ENCODE measurements at regions of chr1 and their contacts with region 1.

Region 1: GRCh38 chr1:232630047-232630893 is at the start of gene SIPA1L2:
- DNase-seq: peak; percentile 97
- H3K4me3 ChIP-seq: peak within 1 kb of the TSS; percentile 65 to 90 (median 79)
- H3K27ac ChIP-seq: peak within 1 kb of the TSS; percentile 32 to 87 (median 84)
- H3K4me1 ChIP-seq: peaks cover 5 to 73% (median 34%) of the 10 kb centered on the region in 6 donors
- H3K27me3 ChIP-seq: peaks cover 0 to 54% (median 10%) of the 10 kb centered on the region in 7 donors
- CTCF ChIP-seq: peak in 7 of 11 experiments; percentile 37 to 56 (median 41)
- POLR2A ChIP-seq: no peak
- total RNA-seq, gene SIPA1L2: 18.4 to 67.7 (median 34.6) TPM

Region 2: GRCh38 chr1:232684363-232685105 is 54.3 kb after region 1 on chr1:
- intact Hi-C with region 1: no loop called
- DNase-seq: no peak
- H3K4me3 ChIP-seq: no peak overlapping the region
- H3K27ac ChIP-seq: no peak overlapping the region
- H3K4me1 ChIP-seq: no peaks in the 10 kb centered on the region
- H3K27me3 ChIP-seq: no peaks in the 10 kb centered on the region
- CTCF ChIP-seq: no peak
- POLR2A ChIP-seq: no peak

Region 3: DNA sequence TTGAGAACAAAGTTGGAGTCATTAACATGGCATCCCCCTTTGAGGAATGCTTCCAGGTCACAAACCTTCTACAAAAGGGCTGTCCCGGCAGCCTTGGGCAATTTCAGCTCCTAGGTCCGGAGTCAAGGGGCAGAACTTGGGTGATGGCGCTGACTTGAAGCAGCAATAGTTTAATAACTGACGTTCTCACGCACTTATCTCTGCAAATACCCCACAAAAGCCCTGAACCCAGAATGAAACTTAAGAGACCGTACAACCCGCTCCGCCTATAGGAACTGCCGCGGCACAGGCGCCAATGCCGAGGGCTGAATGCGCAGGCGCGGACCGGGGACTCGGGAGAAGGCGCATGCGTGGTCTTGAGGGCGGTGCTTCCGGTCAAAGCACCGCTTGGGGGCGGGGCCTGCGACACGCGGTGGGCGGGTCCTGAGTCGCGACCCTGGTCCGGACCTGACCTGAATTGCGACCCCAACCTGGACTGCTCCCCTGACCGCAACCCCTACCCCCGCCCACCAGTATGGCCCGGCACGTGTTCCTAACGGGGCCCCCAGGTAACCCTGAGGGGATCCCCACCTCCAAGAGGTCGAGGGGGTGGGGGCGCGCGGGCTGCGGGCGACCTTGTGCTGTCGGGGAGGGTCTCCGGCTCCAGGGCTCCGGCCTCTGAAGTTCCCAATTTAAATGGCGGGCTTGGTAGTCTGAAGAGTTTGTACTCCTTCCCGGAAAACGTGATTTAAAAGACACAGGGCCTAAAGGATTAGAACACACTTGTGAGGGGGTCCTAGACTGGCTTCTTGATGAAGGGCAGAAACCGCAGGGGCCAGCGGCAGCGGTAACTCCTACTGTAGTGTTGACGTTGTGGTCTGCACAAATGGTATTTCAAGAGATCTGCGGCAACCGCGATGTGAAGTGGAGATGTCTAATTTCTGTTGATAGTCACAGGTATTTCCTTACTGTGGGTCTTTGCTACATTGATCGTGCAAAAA is 320.2 kb after region 1 on chr1 and contains the start of gene NTPCR:
- intact Hi-C with region 1: loop called (anchors 10 kb)
- DNase-seq: peak; percentile 97
- H3K4me3 ChIP-seq: peak within 1 kb of the TSS; percentile 78 to 87 (median 84)
- H3K27ac ChIP-seq: peak within 1 kb of the TSS; percentile 74 to 92 (median 84)
- H3K4me1 ChIP-seq: peaks cover 10 to 32% (median 28%) of the 10 kb centered on the region in 6 donors
- H3K27me3 ChIP-seq: no peaks in the 10 kb centered on the region
- CTCF ChIP-seq: peak in 6 of 11 experiments; percentile 24 to 36 (median 27)
- POLR2A ChIP-seq: no peak
- total RNA-seq, gene NTPCR: 18.8 to 37.9 (median 24.1) TPM

Region 4: GRCh38 chr1:233172227-233172626 is 542.0 kb after region 1 on chr1:
- intact Hi-C with region 1: loop called (anchors 10 kb)
- DNase-seq: no peak
- H3K4me3 ChIP-seq: no peak overlapping the region
- H3K27ac ChIP-seq: no peak overlapping the region
- H3K4me1 ChIP-seq: no peaks in the 10 kb centered on the region
- H3K27me3 ChIP-seq: no peaks in the 10 kb centered on the region
- CTCF ChIP-seq: peak in 8 of 11 experiments; percentile 9 to 40 (median 26)
- POLR2A ChIP-seq: no peak

Measured in spleen (tissue), 13 donors.